ENCODE measurements at regions of chr22 and their contacts with region 1.

Region 1: GRCh38 chr22:36123673-36124630 is 36.6 kb downstream of the APOL3 start:
- DNase-seq: peak; percentile 58
- H3K4me3 ChIP-seq: peak overlapping the region; percentile 10; the same call in 1 of the 2 replicates
- H3K27me3 ChIP-seq: 0 out of 2 replicates have a peak, but pooled peaks cover 1% of the 10 kb centered on the region
- CTCF ChIP-seq: peak; percentile 99

Region 2: DNA sequence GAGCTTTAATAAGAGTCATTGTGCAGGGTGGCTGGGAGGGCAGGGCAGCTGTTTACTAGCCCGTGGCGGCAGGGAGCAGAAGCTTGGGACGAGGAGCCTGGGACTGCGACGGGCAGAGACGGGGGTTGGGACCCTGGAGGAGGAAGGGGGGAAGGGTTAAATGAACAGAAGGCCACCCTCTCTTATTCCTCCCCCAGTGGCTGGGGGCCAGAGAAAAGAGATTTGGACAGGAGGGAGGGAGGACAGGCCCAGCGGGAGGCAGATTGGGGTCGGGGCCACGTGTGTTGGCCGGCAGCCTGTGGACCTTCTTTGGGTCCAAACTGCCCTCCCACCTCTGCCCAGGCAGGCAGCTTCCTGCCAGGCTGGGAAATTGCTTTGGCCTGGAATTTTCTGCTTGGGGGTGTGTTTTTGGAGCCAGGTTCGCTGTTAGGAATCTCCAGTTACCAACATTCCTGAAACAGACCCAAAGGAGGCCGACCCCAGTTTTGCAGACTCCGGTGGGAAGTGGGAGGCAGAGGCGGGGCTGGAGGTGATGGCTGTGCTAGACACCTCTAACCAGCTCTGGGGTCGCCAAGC is 13.6 kb before region 1 on chr22:
- CTCF ChIA-PET with region 1: interaction called, 11 read pairs
- POLR2A ChIA-PET with region 1: no interaction called
- DNase-seq: no peak
- H3K4me3 ChIP-seq: no peak overlapping the region
- H3K27me3 ChIP-seq: no peaks in the 10 kb centered on the region
- CTCF ChIP-seq: no peak

Region 3: DNA sequence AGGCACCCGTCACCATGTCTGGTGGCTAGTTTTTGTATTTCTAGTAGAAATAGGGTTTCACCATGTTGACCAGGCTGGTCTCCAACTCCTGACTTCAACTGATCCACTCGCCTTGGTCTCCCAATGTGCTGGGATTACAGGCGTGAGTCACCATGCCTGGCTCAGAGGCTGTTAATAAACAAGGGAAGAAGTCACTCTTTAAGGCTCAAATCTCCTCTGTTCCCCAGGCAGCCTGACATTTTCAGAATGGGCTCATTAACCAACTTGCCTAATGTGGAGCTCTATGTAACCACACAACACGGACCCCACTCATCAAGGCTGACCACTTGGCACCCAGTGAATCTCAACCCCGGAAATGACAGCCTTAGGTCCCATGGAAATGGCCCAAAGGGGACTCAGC is 12.5 kb after region 1 on chr22:
- CTCF ChIA-PET with region 1: interaction called, 17 read pairs
- POLR2A ChIA-PET with region 1: no interaction called
- DNase-seq: no peak
- H3K4me3 ChIP-seq: no peak overlapping the region
- H3K27me3 ChIP-seq: peaks cover 14% of the 10 kb centered on the region
- CTCF ChIP-seq: no peak

Region 4: GRCh38 chr22:36405671-36406538 is 282.0 kb after region 1 on chr22:
- CTCF ChIA-PET with region 1: no interaction called
- POLR2A ChIA-PET with region 1: no interaction called
- DNase-seq: no peak
- H3K4me3 ChIP-seq: no peak overlapping the region
- H3K27me3 ChIP-seq: no peaks in the 10 kb centered on the region
- CTCF ChIP-seq: no peak

Region 5: DNA sequence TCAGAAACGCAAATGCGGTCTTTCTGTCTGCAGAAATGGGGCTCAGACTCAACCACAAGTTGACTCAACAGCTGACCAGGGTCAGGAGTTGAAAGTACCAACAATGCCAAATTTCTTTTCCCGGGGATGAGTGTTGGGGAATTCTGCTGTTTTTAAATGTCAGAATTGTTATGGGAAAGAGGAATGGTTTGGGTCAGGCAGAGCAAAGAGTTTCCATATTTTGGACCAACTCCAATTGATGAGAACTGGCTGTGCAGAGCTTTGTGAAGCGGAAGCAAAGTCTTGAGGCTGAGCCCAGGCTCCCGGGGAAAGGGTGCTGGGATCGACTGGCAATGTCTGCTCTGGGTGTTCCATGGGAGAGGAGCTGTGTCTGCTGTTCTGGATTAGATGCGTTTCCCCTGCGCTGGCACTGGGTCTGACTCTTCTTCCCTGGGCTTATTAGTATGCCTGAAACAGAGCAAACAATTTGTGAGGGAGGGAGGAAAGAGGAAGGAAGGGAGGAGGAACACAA is 321.3 kb after region 1 on chr22:
- CTCF ChIA-PET with region 1: no interaction called
- POLR2A ChIA-PET with region 1: no interaction called
- DNase-seq: peak; percentile 86
- H3K4me3 ChIP-seq: no peak overlapping the region
- H3K27me3 ChIP-seq: no peaks in the 10 kb centered on the region
- CTCF ChIP-seq: no peak

Region 6: GRCh38 chr22:36457688-36458450 is 333.9 kb after region 1 on chr22:
- CTCF ChIA-PET with region 1: no interaction called
- POLR2A ChIA-PET with region 1: no interaction called
- DNase-seq: no peak
- H3K4me3 ChIP-seq: no peak overlapping the region
- H3K27me3 ChIP-seq: no peaks in the 10 kb centered on the region
- CTCF ChIP-seq: no peak

Measured in BJ (cell line).